Activated naive CD4-positive, alpha-beta T cell treated with anti-CD3 and anti-CD28 coated beads for 36 hours (primary cell): ENCODE measurements at regions of chr10 and their contacts with region 1.

Region 1: DNA sequence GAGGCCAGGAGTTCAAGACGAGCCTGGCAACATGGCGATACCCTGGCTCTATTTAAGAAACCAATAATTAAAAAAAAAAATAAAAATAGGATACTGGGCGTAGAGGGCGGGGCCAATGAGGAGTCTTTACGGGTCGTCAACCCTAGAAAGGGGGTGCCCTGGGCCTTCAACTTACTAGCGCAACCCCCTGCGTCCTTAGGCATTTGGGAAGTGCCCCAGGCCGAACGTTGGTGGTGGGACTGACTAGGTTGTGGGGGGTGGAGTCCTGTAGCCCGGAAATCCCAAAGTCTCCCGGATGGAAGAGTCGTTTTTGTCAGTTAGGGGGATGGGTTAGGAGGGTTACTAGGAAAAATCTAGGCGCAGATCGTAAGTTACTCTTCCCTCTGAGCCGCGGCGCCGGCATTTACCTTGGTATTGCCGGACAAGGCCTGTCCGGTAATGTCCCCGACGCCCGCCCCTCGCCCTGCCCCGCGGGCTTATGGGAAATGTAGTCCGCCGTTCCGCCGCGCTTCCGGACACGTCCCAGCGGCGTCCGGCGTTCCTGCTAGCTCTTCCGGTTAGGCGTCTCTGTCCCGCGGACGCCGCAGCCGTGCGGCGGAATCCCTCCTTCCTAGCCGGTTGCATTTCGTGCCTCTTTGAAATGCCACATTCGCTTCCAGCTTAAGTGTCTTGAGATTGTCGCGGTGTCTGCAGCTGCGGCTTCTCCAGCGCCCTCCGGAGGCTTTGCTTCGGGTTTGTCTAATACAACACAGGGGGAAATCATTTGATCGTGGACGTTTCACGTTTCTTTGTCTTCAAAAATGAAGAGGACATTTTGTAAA is 1.3 kb upstream of the ACBD5 start:
- DNase-seq: peak; percentile 89
- H3K4me3 Mint-ChIP-seq: peak overlapping the region; percentile 93
- H3K27ac Mint-ChIP-seq: peak overlapping the region; percentile 100
- H3K4me1 Mint-ChIP-seq: peaks cover 22% of the 10 kb centered on the region
- H3K27me3 Mint-ChIP-seq: no peaks in the 10 kb centered on the region

Region 2: DNA sequence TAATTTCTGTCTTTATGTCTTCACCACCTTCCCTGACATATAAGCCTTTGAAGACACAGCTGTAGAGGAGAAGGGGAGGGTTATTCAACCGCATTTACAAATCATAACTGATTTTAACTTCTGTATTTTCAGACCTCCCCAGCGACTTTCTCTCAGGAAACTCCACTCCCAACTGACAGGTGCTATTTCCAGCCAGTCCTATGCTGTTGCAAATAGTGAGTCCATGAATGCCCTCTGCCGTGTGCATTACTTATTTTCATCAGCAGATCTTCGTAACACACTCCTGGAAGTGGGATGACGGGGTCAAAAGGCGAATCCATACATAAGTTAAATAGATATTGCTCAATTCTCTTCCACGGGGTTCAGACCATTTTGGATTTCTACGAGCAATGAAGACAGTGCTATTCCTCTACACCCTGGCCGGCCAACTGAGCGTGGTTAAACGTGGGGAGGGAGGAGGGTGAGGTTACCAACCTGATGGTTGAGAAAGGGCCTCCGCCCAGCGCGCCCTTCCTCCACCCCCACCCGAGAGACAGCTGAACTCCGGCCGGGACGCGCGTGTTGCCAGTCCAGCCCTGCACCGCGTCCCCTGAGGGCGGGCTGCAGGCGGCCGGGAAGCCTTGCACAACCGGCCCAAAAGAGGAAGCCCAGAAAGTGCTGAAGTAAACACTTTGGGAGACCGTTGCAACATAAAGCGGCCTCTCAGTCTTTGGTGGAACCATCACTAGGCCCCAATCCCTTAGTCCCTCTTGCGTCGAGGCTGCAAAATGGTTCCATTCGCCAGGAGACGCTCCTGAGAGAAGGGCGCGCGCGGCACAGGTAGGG is 804.0 kb before region 1 on chr10 and contains the start of gene APBB1IP:
- CTCF ChIA-PET with region 1: no interaction called
- intact Hi-C with region 1: loop called (anchors 2 kb)
- DNase-seq: peak; percentile 58
- H3K4me3 Mint-ChIP-seq: peak within 1 kb of the TSS; percentile 81
- H3K27ac Mint-ChIP-seq: peak within 1 kb of the TSS; percentile 98
- H3K4me1 Mint-ChIP-seq: peaks cover 50% of the 10 kb centered on the region
- H3K27me3 Mint-ChIP-seq: no peaks in the 10 kb centered on the region
- total RNA-seq, gene APBB1IP: 29.4 to 30.9 TPM

Region 3: GRCh38 chr10:26737730-26738129 is 504.1 kb before region 1 on chr10:
- CTCF ChIA-PET with region 1: no interaction called
- intact Hi-C with region 1: loop called (anchors 2 kb)
- DNase-seq: peak; percentile 75
- H3K4me3 Mint-ChIP-seq: no peak overlapping the region
- H3K27ac Mint-ChIP-seq: peak overlapping the region; percentile 88
- H3K4me1 Mint-ChIP-seq: peaks cover 36% of the 10 kb centered on the region
- H3K27me3 Mint-ChIP-seq: no peaks in the 10 kb centered on the region

Region 4: DNA sequence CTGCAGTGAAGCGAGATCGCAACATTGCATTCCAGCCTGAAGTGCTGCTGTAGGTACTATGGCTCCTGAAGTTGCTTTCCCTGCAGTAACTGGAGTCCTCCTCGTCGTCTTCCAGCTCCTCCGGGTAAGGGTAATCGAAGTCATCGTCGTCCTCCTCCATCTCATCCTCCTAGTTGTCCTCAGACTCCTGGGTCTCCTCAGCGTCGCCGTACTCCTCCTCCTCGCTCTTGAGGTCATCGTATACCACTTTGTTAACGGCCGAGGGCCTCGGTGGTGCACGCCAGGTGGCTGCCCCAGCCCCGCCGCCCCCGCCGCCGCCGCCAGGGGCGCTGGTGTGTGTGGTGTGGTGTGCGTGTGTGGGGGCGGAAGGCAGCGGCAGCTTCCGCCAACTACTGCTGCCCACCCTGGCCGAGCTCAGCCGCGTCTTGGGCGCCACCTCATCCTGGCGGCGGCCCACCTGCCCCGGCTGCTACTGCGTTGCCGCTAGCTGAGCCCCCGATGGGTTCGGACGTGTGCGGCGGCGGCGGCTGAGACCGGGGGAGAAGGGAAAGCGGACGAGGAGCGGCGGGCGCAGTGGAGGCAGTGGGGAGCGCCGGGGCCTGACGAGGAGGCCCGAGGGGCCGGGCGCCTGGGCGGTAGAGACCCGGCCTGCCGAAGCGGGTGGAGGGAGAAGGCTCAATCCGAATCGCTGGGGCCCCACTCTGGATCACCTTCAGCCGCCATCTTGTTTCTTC is 10.6 kb after region 1 on chr10:
- CTCF ChIA-PET with region 1: interaction called, 12 read pairs
- intact Hi-C with region 1: loop called (anchors 1 kb)
- DNase-seq: peak; percentile 80
- H3K4me3 Mint-ChIP-seq: peak overlapping the region; percentile 73
- H3K27ac Mint-ChIP-seq: peak overlapping the region; percentile 78
- H3K4me1 Mint-ChIP-seq: peaks cover 10% of the 10 kb centered on the region
- H3K27me3 Mint-ChIP-seq: peaks cover 5% of the 10 kb centered on the region

Region 5: GRCh38 chr10:27504007-27504807 is 262.3 kb after region 1 on chr10 and contains the start of gene RAB18:
- CTCF ChIA-PET with region 1: no interaction called
- intact Hi-C with region 1: loop called (anchors 1 kb)
- DNase-seq: peak; percentile 99
- H3K4me3 Mint-ChIP-seq: peak within 1 kb of the TSS; percentile 99
- H3K27ac Mint-ChIP-seq: peak within 1 kb of the TSS; percentile 92
- H3K4me1 Mint-ChIP-seq: peaks cover 41% of the 10 kb centered on the region
- H3K27me3 Mint-ChIP-seq: no peaks in the 10 kb centered on the region
- total RNA-seq, gene RAB18: 35.4 to 41.3 TPM

Region 6: DNA sequence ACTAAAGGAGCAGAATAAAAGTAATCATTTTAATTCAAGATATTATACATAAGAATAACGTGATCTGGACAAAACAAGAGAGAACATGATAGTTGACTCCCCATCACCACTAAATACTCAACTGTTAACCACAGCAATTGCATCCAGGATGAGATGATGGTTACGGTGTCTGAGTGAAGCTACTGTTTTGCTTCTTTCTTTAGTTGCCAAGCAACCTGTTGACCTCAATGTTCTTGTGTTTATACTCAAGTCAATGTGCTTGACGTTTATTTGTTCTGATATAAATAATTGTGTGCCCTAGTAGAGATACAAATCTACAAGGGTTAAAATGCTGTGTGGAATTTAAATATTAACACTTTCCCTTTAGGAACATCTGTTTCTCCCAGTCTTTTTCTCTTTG is 1092.4 kb after region 1 on chr10:
- CTCF ChIA-PET with region 1: no interaction called
- intact Hi-C with region 1: loop called (anchors 5 kb)
- DNase-seq: peak; percentile 61
- H3K4me3 Mint-ChIP-seq: peak overlapping the region; percentile 67
- H3K27ac Mint-ChIP-seq: peak overlapping the region; percentile 96
- H3K4me1 Mint-ChIP-seq: peaks cover 76% of the 10 kb centered on the region
- H3K27me3 Mint-ChIP-seq: no peaks in the 10 kb centered on the region

Region 7: DNA sequence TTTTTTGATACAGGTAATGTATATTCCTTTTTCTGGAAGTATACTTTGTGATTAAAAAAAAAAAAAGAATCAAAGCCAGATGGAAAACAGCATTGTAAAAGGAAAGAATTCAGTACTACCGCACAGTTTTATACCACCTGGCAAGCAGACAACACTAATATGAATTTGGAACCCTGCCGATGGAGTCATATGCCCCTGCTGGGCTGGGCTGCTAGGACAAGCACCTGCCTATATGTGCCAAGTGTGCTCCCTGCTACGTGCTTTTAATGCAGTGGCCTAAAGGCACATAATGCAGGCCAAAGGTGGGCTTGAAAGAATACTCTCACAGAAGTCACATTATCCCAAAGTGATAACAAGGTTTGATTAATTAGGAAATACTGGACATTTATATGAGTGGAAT is 1261.3 kb after region 1 on chr10:
- CTCF ChIA-PET with region 1: no interaction called
- intact Hi-C with region 1: no loop called
- DNase-seq: no peak
- H3K4me3 Mint-ChIP-seq: no peak overlapping the region
- H3K27ac Mint-ChIP-seq: no peak overlapping the region
- H3K4me1 Mint-ChIP-seq: no peaks in the 10 kb centered on the region
- H3K27me3 Mint-ChIP-seq: no peaks in the 10 kb centered on the region